ENCODE measurements at regions of chr4 and their contacts with region 1.

Region 1: DNA sequence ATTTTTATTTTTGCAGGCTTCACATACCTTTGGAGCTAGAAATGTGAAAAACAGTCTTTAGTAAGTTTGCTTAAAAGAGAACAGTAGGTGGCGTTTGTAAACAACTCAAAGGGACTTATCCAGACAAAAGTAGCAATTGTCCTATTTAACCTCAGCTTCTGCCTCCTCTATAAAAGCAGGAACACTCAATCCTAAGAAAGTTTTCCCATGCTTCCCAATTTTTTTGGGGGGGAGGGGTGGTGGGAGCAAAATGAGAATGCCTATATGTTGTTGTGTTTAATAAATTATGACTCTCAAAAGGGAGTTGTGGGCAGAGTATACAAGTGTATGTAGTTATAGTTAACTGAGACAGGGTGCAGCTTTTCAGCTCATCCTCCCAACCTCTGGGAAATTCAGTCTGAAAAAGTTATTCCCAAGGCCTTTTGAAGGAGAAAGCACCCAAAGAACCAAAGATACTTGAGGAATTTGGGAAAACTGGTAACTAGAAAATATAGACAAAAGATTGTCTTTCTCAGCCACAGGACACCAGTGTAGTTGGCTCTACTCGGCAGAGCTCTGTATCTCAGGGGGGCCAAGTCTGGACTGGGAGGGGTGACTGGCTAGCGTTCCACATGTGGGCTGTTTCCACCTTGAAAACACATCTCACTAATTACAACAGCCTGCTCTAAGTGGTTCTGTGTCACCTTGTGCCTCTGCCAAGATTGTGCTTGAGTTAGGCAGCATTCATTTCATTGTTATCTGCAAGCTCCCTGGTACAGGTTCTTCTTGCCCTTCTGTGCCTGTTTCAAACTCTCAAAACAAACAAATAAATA is 2.8 kb downstream of the SFRP2 start:
- DNase-seq: no peak
- H3K4me3 ChIP-seq: no peak overlapping the region
- H3K27me3 ChIP-seq: peaks cover 33% of the 10 kb centered on the region
- CTCF ChIP-seq: peak; percentile 56

Region 2: GRCh38 chr4:153564630-153565525 is 221.2 kb before region 1 on chr4:
- CTCF ChIA-PET with region 1: no interaction called
- POLR2A ChIA-PET with region 1: no interaction called
- DNase-seq: no peak
- H3K4me3 ChIP-seq: no peak overlapping the region
- H3K27me3 ChIP-seq: no peaks in the 10 kb centered on the region
- CTCF ChIP-seq: no peak

Region 3: GRCh38 chr4:153940916-153941315 is 154.8 kb after region 1 on chr4:
- CTCF ChIA-PET with region 1: no interaction called
- POLR2A ChIA-PET with region 1: no interaction called
- DNase-seq: no peak
- H3K4me3 ChIP-seq: no peak overlapping the region
- H3K27me3 ChIP-seq: no peaks in the 10 kb centered on the region
- CTCF ChIP-seq: no peak

Region 4: GRCh38 chr4:154314248-154314647 is 528.1 kb after region 1 on chr4:
- CTCF ChIA-PET with region 1: interaction called, 10 read pairs
- POLR2A ChIA-PET with region 1: no interaction called
- DNase-seq: peak; percentile 10
- H3K4me3 ChIP-seq: no peak overlapping the region
- H3K27me3 ChIP-seq: no peaks in the 10 kb centered on the region
- CTCF ChIP-seq: peak; percentile 46; the same call in 1 of the 2 replicates

Measured in BJ (cell line).